ENCODE measurements at regions of chr10 and their contacts with region 1.

Region 1: GRCh38 chr10:16545116-16545736 is 23.5 kb upstream of the C1QL3 start:
- DNase-seq: peak; percentile 52
- CTCF ChIP-seq: peak; percentile 73

Region 2: DNA sequence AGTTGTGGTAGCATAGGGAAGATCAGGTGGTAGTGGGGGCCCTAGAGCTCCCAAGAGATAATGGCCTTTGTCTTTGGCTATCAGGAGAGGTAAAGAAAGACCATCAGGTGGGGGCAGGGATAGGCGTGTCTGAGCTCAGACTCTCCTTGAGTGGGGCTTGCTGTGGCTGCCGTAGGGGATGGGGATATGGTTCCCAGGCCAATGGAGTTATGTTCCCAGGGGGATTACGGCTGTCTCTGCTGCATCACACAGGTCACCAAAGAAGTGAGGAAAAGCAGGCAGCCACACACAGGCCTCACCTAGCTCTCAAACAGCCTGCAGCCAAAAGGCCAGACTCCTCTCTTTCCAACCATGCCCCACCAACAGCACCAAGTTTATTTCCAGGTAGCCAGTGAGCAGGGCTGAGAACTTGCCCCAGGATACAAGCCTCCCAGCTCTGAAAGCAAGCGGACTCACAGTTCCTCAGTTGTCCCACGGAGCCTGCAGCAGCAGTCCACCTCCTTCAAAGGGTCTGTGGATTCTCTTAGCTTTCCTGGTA is 14.1 kb after region 1 on chr10:
- CTCF ChIA-PET with region 1: interaction called, 29 read pairs
- POLR2A ChIA-PET with region 1: no interaction called
- DNase-seq: no peak
- CTCF ChIP-seq: no peak

Measured in GM10248 (cell line).